Thyroid gland (tissue), 4 donors: ENCODE measurements at regions of chr17 and their contacts with region 1.

Region 1: GRCh38 chr17:57597531-57598453 is 147.3 kb downstream of the CCDC182 start:
- DNase-seq: peak; percentile 74 to 81
- H3K4me3 ChIP-seq: no peak overlapping the region
- H3K27ac ChIP-seq: peak overlapping the region in 1 of 3 donors; percentile 35
- H3K4me1 ChIP-seq: peaks cover 0 to 12% of the 10 kb centered on the region in 2 donors
- H3K27me3 ChIP-seq: no peaks in the 10 kb centered on the region
- CTCF ChIP-seq: peak; percentile 46 to 84 (median 66)
- POLR2A ChIP-seq: no peak

Region 2: DNA sequence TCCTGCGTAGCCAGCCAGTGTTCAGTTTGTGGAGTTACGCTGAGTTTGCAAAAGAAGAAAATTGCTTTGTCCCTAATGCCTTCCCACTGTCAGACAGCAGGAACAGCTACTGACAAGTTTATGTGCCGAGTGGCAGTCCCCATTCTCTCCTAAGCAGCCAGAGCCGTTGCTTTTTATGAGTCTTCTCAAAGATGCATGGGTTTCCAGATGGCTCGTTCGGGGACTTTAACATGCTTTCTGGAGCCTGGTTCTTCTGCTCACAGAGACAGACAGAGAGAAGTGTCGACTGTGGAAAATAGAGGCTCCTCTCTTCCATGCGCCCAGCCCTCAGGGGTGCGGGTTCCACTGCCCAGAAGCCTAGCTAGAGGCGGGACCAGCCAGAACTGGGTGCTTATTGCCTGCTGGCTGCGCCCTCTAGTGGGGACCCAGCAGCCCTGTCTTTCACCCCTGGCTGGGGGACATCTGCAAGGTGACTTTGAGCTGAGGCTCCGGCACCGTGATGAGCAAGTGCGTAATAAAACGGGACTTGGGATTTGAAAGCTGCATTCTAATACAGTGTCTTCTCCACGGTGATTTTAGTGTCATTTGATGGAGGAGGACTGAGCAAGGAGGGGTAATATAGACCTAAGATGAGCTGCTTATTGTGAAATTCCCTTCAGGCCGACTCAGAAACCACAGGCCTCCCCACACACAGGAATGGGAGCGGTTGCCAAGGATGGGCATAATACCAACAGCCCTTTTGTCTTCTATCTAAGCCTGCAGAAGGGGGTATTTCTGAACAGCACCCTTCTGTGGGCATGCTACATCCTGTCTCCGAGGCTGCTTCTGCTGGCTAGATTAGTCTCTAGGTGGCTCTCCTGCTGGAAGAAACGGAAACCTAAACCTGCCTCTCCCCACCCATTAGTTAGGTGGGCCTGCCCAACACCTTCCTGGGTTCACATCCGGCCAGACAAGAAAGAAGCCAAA is 74.2 kb after region 1 on chr17:
- intact Hi-C with region 1: loop called (anchors 5 kb)
- DNase-seq: peak; percentile 75 to 80
- H3K4me3 ChIP-seq: no peak overlapping the region
- H3K27ac ChIP-seq: no peak overlapping the region
- H3K4me1 ChIP-seq: peaks cover 0 to 4% of the 10 kb centered on the region in 2 donors
- H3K27me3 ChIP-seq: no peaks in the 10 kb centered on the region
- CTCF ChIP-seq: peak; percentile 86 to 96 (median 87)
- POLR2A ChIP-seq: no peak

Region 3: GRCh38 chr17:57685505-57686132 is 87.8 kb after region 1 on chr17:
- intact Hi-C with region 1: no loop called
- DNase-seq: no peak
- H3K4me3 ChIP-seq: no peak overlapping the region
- H3K27ac ChIP-seq: no peak overlapping the region
- H3K4me1 ChIP-seq: peaks cover 9 to 12% of the 10 kb centered on the region in 2 donors
- H3K27me3 ChIP-seq: no peaks in the 10 kb centered on the region
- CTCF ChIP-seq: no peak
- POLR2A ChIP-seq: no peak

Region 4: GRCh38 chr17:57772774-57773173 is 175.0 kb after region 1 on chr17:
- intact Hi-C with region 1: no loop called
- DNase-seq: no peak
- H3K4me3 ChIP-seq: no peak overlapping the region
- H3K27ac ChIP-seq: no peak overlapping the region
- H3K4me1 ChIP-seq: no peaks in the 10 kb centered on the region
- H3K27me3 ChIP-seq: no peaks in the 10 kb centered on the region
- CTCF ChIP-seq: no peak
- POLR2A ChIP-seq: no peak